Activated CD4-positive, alpha-beta T cell treated with anti-CD3 and anti-CD28 coated beads, Interleukin-2, amount 10 ng/mL, durations not matched to agents 24 days and 14 days (primary cell): ENCODE measurements at regions of chrX and their contacts with region 1.

Region 1: GRCh38 chrX:48957827-48958634 is 624 bp upstream of the OTUD5 start:
- DNase-seq: peak; percentile 97
- H3K4me3 Mint-ChIP-seq: peak overlapping the region; percentile 98
- H3K27ac Mint-ChIP-seq: peak overlapping the region; percentile 100
- H3K4me1 Mint-ChIP-seq: peaks cover 36% of the 10 kb centered on the region
- H3K27me3 Mint-ChIP-seq: no peaks in the 10 kb centered on the region

Region 2: GRCh38 chrX:48937054-48937907 is 20.8 kb before region 1 on chrX:
- intact Hi-C with region 1: loop called (anchors 1 kb)
- DNase-seq: peak; percentile 96
- H3K4me3 Mint-ChIP-seq: peak overlapping the region; percentile 82
- H3K27ac Mint-ChIP-seq: peak overlapping the region; percentile 96
- H3K4me1 Mint-ChIP-seq: peaks cover 72% of the 10 kb centered on the region
- H3K27me3 Mint-ChIP-seq: no peaks in the 10 kb centered on the region

Region 3: DNA sequence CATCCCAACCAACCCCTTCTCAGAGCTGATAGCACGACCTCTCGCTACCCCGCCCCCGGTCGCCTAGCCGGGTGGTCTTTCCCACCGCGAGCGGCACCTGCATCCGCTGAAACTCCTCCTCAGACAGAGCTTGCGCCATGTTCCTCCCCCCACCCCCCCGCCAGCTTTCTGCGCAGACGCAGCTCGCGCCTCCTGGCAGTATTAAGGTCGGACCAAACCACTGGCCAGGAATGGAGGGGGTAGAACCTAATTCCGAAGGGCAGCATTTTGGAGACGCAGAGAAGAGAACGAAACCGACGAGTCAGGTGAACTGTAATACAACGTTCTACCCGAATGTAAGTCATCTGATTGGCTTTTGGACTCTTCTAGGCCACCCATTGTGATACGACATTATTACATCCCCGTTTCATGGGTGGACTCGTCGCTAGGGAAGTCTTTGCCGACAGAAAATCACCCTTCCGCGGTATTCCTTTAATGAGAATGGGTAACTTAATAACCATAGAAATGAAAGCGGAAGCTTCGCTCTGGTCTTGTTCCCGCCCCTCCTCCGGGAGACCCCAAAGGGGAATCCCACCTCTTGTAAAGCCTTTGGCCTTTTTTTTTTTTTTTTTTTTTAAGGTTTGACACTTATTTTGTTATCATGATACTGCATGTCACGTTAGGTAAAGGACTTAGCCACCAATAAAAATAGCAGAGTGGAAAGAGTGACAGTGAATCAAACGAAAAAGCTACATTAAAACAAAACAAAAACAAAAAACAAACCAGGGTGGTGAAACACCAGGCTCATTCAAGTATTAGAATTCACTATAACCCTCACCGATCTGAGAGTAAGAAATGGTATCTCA is 44.3 kb after region 1 on chrX and contains the start of gene GRIPAP1:
- intact Hi-C with region 1: loop called (anchors 1 kb)
- DNase-seq: peak; percentile 92
- H3K4me3 Mint-ChIP-seq: peak within 1 kb of the TSS; percentile 99
- H3K27ac Mint-ChIP-seq: peak within 1 kb of the TSS; percentile 98
- H3K4me1 Mint-ChIP-seq: peaks cover 28% of the 10 kb centered on the region
- H3K27me3 Mint-ChIP-seq: no peaks in the 10 kb centered on the region
- total RNA-seq, gene GRIPAP1: 85.7 and 87.3 TPM in 2 replicates